ENCODE measurements at regions of chr5 and their contacts with region 1.

Region 1: DNA sequence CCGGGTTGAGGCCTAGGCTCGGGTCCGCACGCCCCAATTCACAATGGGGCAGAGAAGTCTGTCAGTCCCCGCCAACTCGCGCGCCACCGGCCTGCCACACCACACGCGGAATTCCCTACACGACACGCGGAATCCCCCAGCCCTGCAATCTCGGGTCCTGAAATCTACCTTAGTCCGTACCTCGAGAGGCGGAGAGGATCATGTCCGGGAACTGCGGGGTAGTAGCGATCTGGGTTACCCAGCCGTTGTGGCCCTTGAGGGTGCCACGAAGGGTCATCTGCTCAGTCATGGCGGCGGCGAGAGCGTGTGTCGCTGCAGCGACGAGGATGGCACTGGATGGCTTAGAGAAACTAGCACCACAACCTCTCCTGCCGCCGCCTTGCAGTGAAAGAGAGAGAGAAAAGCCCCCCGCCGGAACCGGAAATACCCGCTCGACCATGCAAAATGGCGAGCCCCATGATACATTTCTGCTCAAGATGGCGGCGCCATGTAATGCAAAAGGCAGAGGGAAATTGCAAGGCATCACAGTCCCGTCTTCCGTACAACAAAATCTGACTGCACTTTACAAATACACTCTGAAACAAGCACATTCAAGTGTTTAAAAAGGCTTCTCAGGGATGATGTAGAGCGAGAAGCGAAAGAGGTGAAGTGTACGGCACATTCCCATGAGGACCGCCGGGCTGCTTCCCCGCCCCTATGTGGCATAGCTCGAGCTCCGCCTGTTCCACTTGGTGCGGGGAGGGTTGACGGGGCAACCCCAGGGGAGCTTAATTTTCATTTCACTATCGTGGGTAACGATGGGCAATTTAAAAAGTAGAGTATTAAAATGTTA is at the start of gene RACK1:
- DNase-seq: peak in 1 of 2 donors; percentile 94
- H3K4me3 ChIP-seq: peak within 1 kb of the TSS; percentile 86 to 91
- H3K27ac ChIP-seq: peak within 1 kb of the TSS; percentile 98 to 99
- H3K4me1 ChIP-seq: peaks cover 31 to 48% of the 10 kb centered on the region in 2 donors
- H3K27me3 ChIP-seq: no peaks in the 10 kb centered on the region
- CTCF ChIP-seq: no peak
- total RNA-seq, gene RACK1: 2,870 TPM

Region 2: GRCh38 chr5:180353048-180353979 is 890.4 kb before region 1 on chr5 and contains the start of gene GFPT2:
- intact Hi-C with region 1: loop called (anchors 10 kb)
- DNase-seq: peak; percentile 35 to 91
- H3K4me3 ChIP-seq: peak within 1 kb of the TSS; percentile 83 to 88
- H3K27ac ChIP-seq: peak within 1 kb of the TSS; percentile 51 to 62
- H3K4me1 ChIP-seq: peaks cover 0 to 3% of the 10 kb centered on the region in 2 donors
- H3K27me3 ChIP-seq: no peaks in the 10 kb centered on the region
- CTCF ChIP-seq: no peak
- total RNA-seq, gene GFPT2: 25.2 TPM

Region 3: DNA sequence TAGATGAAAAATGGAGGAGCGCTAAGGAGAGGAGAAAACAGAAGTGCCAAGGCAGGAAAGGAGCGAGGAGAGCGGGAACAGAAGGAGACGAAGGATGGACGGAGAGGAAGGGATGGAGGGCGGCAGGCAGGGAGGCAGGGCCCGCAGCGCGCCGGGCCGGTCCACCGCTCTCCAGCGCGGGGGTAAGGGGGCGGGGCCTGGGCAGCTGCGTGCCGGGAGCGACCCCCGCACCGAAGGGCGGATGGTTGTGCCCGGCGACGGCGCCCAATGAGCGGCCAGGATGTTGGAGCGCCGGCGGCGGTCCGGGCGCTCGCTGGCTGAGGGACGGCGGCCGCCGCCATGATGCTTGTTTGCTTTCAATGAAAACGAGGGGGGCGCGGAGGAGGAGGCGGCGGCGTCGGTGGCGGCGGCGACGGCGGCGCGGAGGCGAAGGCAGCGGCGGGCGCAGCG is 749.6 kb before region 1 on chr5 and contains the start of gene CNOT6:
- intact Hi-C with region 1: loop called (anchors 10 kb)
- DNase-seq: peak; percentile 68 to 94
- H3K4me3 ChIP-seq: peak within 1 kb of the TSS; percentile 94 to 95
- H3K27ac ChIP-seq: peak within 1 kb of the TSS; percentile 84 to 98
- H3K4me1 ChIP-seq: peaks cover 4 to 15% of the 10 kb centered on the region in 2 donors
- H3K27me3 ChIP-seq: no peaks in the 10 kb centered on the region
- CTCF ChIP-seq: no peak
- total RNA-seq, gene CNOT6: 12.0 TPM

Region 4: GRCh38 chr5:181191529-181192394 is 52.0 kb before region 1 on chr5:
- intact Hi-C with region 1: loop called (anchors 1 kb)
- DNase-seq: peak; percentile 86 to 98
- H3K4me3 ChIP-seq: peak overlapping the region; percentile 61 to 84
- H3K27ac ChIP-seq: peak overlapping the region; percentile 82 to 88
- H3K4me1 ChIP-seq: peaks cover 3 to 10% of the 10 kb centered on the region in 2 donors
- H3K27me3 ChIP-seq: no peaks in the 10 kb centered on the region
- CTCF ChIP-seq: no peak

Region 5: DNA sequence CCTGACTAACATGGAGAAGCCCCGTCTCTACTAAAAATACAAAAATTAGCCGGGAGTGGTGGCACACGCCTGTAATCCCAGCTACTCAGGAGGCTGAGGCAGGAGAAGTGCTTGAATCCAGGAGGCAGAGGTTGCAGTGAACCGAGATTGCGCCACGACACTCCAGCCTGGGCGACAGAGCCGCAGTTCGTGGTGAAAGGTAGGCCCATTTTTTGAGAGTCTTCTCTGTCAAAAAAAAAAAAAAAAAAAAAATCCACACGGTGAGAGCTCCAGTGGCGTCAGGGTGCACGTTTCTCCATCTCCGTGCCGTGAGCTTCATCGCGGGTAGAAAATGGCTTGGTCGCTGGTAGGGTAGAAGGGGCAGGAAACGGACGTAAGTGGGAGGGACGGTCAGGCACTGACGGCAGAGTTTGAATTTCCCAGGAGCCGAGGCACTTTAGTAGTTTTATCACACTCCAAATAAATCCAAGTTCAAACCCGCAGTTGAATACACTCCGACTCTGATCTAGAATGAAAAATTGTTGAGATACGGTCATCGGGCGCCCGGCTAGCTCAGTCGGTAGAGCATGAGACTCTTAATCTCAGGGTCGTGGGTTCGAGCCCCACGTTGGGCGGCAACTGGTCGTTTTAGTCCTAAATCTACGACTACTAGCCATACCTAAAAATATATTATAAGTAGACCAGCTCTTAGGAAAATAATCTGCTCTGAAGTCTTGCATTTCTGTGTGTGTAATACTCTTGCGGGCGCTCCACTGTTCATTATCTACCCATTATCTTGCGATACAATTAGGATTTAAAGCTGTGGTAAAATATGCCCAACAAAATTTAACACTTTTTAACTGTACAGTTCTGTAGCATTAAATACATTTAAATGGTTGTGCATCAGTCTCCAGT is 36.3 kb before region 1 on chr5:
- intact Hi-C with region 1: loop called (anchors 1 kb)
- DNase-seq: peak in 1 of 2 donors; percentile 90
- H3K4me3 ChIP-seq: peak overlapping the region; percentile 53 to 72
- H3K27ac ChIP-seq: peak overlapping the region; percentile 87 to 88
- H3K4me1 ChIP-seq: peaks cover 4 to 13% of the 10 kb centered on the region in 2 donors
- H3K27me3 ChIP-seq: no peaks in the 10 kb centered on the region
- CTCF ChIP-seq: no peak

Region 6: GRCh38 chr5:181223058-181223728 is 20.5 kb before region 1 on chr5 and contains the start of gene TRIM41:
- intact Hi-C with region 1: loop called (anchors 1 kb)
- DNase-seq: peak; percentile 94 to 99
- H3K4me3 ChIP-seq: peak within 1 kb of the TSS; percentile 79 to 81
- H3K27ac ChIP-seq: peak within 1 kb of the TSS; percentile 93 to 94
- H3K4me1 ChIP-seq: peaks cover 6 to 7% of the 10 kb centered on the region in 2 donors
- H3K27me3 ChIP-seq: no peaks in the 10 kb centered on the region
- CTCF ChIP-seq: no peak
- total RNA-seq, gene TRIM41: 105 TPM

Region 7: DNA sequence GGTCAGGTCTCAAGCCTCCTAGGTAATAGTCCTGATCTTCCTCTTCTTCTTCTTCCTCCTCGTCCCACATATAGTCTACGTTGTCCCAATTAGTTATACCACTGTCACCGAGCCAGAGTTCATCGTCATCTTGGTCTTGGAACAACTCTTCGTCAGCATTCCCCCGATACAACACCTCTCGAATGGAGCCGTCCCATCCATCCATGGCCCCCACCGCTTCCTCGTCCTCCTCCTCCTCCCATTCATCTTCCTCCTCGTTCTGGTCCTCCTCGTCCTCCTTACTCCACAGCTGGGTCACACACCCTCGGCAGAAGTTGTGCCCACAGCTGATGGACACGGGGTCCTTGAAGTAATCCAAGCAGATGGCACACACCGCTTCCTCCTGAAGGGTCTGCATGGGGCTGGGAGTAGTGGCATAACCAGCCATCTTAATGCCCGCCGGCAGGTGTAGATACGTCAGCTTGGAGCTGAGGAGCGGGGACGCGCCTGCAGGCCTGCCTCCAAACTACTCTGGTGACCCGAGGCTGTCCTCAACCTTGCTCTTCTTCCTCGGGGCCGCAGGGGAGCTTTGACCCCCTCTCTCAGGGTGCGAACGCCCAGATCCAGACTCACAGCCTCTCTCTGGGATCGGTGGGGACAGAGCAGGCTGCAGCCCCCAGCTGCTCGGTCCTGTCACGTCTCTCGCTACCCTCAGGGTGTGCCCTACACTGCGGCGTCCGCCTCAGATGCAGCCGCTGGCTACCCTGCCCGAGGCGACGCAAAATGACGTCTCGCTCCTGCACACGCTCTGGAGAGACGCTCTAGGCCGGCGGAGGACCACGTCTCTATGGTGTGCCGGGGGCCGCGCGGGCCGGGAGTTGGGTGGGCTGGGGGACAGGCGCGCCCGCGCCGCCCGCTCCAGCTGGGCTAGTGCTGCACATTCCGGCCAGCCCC is 16.9 kb after region 1 on chr5 and contains the start of gene TRIM52:
- intact Hi-C with region 1: loop called (anchors 1 kb)
- DNase-seq: peak; percentile 56 to 95
- H3K4me3 ChIP-seq: peak within 1 kb of the TSS; percentile 74 to 99
- H3K27ac ChIP-seq: peak within 1 kb of the TSS; percentile 97 to 100
- H3K4me1 ChIP-seq: peaks cover 2 to 27% of the 10 kb centered on the region in 2 donors
- H3K27me3 ChIP-seq: no peaks in the 10 kb centered on the region
- CTCF ChIP-seq: peak in 1 of 3 experiments; percentile 9
- total RNA-seq, gene TRIM52: 21.2 TPM